ENCODE measurements at regions of chr12 and their contacts with region 1.

Region 1: GRCh38 chr12:107660235-107660634 is 25.4 kb upstream of the PWP1 start:
- DNase-seq: no peak
- ATAC-seq: no peak
- H3K4me3 ChIP-seq: no peak overlapping the region
- H3K27ac ChIP-seq: no peak overlapping the region
- H3K4me1 ChIP-seq: peaks cover 0 to 11% (median 0%) of the 10 kb centered on the region in 12 donors
- H3K27me3 ChIP-seq: no peaks in the 10 kb centered on the region
- CTCF ChIP-seq: no peak
- POLR2A ChIP-seq: no peak

Region 2: GRCh38 chr12:107536613-107537012 is 123.6 kb before region 1 on chr12:
- intact Hi-C with region 1: no loop called
- DNase-seq: no peak
- ATAC-seq: no peak
- H3K4me3 ChIP-seq: no peak overlapping the region
- H3K27ac ChIP-seq: no peak overlapping the region
- H3K4me1 ChIP-seq: peaks cover 0 to 4% (median 0%) of the 10 kb centered on the region in 12 donors
- H3K27me3 ChIP-seq: no peaks in the 10 kb centered on the region
- CTCF ChIP-seq: no peak
- POLR2A ChIP-seq: no peak

Region 3: GRCh38 chr12:108047071-108047550 is 386.9 kb after region 1 on chr12:
- intact Hi-C with region 1: loop called in 1 of 10 experiments (anchors 10 kb)
- DNase-seq: no peak
- ATAC-seq: peak in 1 of 4 donors; percentile 63
- H3K4me3 ChIP-seq: peak overlapping the region in 6 of 12 donors; percentile 7 to 37 (median 20)
- H3K27ac ChIP-seq: peak overlapping the region in 6 of 12 donors; percentile 44 to 85 (median 64)
- H3K4me1 ChIP-seq: peaks cover 0 to 11% (median 3%) of the 10 kb centered on the region in 12 donors
- H3K27me3 ChIP-seq: peaks cover 0 to 34% (median 0%) of the 10 kb centered on the region in 9 donors
- CTCF ChIP-seq: no peak
- POLR2A ChIP-seq: no peak

Measured in heart left ventricle (tissue), 16 donors.